Posterior vena cava (tissue), 2 donors: ENCODE measurements at regions of chrX and their contacts with region 1.

Region 1: DNA sequence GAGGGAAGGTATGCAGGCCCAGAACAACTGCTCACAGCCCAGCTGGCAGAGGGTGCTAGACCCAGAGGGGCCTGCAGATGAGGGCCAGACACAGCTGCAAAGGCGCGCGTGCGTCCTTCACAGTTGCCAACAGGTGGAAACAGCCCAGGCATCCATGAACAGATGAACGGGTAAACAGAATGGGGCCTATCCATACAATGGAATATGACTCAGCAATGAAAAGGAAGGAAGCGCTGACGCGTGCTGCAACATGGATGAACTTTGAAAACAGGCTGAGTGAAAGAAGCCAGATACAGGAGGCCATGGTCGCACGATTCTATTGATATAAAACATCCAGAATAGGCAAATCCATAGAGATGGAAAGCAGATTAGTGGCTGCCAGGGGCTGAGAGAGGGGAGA is 83.1 kb upstream of the DDX3X start:
- DNase-seq: no peak

Region 2: DNA sequence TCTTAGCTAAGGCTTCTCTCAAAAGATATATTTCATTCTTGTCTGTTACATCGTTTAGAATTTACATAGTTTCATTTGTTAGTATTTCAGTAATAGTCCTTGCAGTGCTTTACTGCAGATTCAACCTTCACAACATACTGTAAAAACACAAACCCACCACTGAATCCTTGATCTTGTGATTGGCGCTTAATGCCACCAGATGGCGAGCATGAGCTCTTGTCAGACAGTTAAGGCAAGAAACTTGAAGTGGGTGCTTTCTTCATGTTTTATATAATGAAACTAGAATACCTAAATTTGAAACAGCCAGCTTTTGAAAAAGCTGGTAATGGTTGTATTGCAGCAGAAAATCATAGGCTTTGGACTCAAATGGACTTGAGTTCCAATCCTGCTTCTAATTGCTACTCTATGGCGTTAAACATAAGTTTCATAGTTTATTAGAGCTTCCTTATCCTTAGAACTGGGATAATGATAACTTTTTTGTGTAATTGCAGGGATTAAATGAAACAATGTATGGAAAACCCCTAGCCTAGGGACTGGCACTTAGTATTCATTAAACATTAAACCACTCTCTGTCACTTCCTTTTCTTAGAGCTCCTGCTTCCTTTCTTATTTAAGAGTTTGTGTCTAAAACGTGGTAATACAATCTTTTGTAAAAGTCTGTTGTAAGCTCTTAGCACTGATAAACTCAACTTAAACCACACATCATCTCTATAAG is 70.5 kb before region 1 on chrX:
- intact Hi-C with region 1: loop called in 1 of 2 experiments (anchors 5 kb)
- DNase-seq: no peak

Region 3: DNA sequence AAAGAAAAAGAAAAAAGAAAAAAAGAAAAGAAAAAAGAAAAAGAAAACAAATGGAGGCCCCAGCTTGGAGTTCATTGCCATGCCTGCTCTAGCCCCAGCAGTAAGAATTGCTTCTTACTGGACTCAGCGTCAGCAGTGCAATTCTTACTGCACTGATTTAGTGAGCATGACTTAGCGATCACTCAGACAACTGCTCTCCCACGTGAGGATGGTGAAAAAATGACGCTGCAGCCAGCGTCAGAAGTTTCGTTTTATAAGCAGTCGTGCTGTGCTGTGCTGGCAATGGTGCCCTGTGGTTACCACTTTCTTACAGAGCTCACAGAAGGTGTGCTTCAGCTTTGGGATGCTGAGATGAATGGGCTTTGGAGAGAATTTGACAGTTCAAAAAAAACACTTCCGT is 14.7 kb after region 1 on chrX:
- intact Hi-C with region 1: loop called in 1 of 2 experiments (anchors 1 kb)
- DNase-seq: no peak

Region 4: DNA sequence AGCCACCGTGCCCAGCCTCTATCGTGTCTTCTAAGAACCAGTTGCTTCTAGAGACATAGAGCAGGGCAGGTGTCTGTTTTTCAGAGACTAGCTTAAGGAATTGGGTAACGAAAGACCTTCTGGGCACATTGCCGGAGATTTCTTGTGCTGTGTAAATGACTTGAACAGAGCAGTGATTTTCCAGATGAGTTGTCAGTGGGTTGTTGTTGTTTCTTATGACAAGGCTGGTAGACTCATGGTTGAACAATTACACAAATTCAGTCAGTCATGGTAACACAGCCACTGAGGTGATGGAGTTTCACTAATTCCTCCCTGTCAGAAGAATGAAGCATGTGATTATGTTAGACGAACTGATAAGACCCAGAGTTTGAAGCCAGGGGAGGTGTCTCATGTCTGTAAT is 62.6 kb after region 1 on chrX:
- intact Hi-C with region 1: no loop called
- DNase-seq: no peak

Region 5: GRCh38 chrX:41435708-41436107 is 184.8 kb after region 1 on chrX:
- intact Hi-C with region 1: no loop called
- DNase-seq: no peak